CD14-positive monocyte (primary cell): ENCODE measurements at regions of chr11 and their contacts with region 1.

Region 1: GRCh38 chr11:64916775-64917662 is at the start of gene ATG2A:
- DNase-seq: peak; percentile 99 to 100 (median 99)
- H3K4me3 ChIP-seq: peak within 1 kb of the TSS; percentile 76 to 94 (median 84)
- H3K4me3 Mint-ChIP-seq: peak within 1 kb of the TSS; percentile 97 to 99
- H3K27ac ChIP-seq: peak within 1 kb of the TSS; percentile 69 to 84
- H3K27ac Mint-ChIP-seq: peak within 1 kb of the TSS; percentile 90 to 99 (median 97)
- H3K4me1 ChIP-seq: peaks cover 24 to 26% of the 10 kb centered on the region in 2 donors
- H3K4me1 Mint-ChIP-seq: peaks cover 27% of the 10 kb centered on the region
- H3K27me3 ChIP-seq: no peaks in the 10 kb centered on the region
- H3K27me3 Mint-ChIP-seq: peaks cover 0 to 2% (median 0%) of the 10 kb centered on the region in 3 donors
- CTCF ChIP-seq: no peak
- polyA plus RNA-seq, gene ATG2A: 2.6 to 24.9 (median 4.0) TPM

Region 2: DNA sequence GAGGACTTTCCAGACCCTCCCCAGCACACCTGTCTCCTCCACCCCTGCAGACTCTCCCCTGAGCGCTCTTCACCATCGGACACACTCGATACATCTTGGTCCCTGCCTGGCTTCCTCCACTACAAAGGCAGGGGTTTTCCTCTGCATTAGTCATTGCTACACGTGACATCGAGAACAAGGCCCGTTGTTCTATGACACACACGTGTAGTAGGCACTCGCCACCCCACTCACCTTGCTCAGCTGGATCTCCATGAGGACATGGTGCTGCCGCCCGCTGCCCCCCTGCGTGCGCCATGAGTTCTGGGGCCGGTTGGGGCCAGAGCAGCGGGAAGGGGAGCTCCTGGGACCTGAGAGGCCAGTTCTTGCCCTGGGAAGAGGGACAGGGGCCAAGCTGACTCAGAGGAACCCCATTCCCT is 16.7 kb before region 1 on chr11:
- intact Hi-C with region 1: no loop called
- DNase-seq: peak in 1 of 3 donors; percentile 61
- H3K4me3 ChIP-seq: no peak overlapping the region
- H3K4me3 Mint-ChIP-seq: no peak overlapping the region
- H3K27ac ChIP-seq: no peak overlapping the region
- H3K27ac Mint-ChIP-seq: peak overlapping the region in 3 of 7 donors; percentile 3 to 67 (median 5)
- H3K4me1 ChIP-seq: no peaks in the 10 kb centered on the region
- H3K4me1 Mint-ChIP-seq: no peaks in the 10 kb centered on the region
- H3K27me3 ChIP-seq: no peaks in the 10 kb centered on the region
- H3K27me3 Mint-ChIP-seq: no peaks in the 10 kb centered on the region
- CTCF ChIP-seq: no peak

Region 3: GRCh38 chr11:65027213-65028067 is 110.4 kb after region 1 on chr11 and contains the start of gene SNX15:
- intact Hi-C with region 1: loop called (anchors 5 kb)
- DNase-seq: peak; percentile 87 to 93 (median 88)
- H3K4me3 ChIP-seq: peak within 1 kb of the TSS; percentile 45 to 78 (median 66)
- H3K4me3 Mint-ChIP-seq: peak within 1 kb of the TSS; percentile 78 to 83
- H3K27ac ChIP-seq: peak within 1 kb of the TSS; percentile 63 to 78
- H3K27ac Mint-ChIP-seq: peak within 1 kb of the TSS; percentile 71 to 95 (median 90)
- H3K4me1 ChIP-seq: peaks cover 14 to 20% of the 10 kb centered on the region in 2 donors
- H3K4me1 Mint-ChIP-seq: peaks cover 25% of the 10 kb centered on the region
- H3K27me3 ChIP-seq: no peaks in the 10 kb centered on the region
- H3K27me3 Mint-ChIP-seq: peaks cover 0 to 1% (median 0%) of the 10 kb centered on the region in 3 donors
- CTCF ChIP-seq: peak; percentile 90
- polyA plus RNA-seq, gene SNX15: 16.2 to 26.7 (median 17.8) TPM

Region 4: DNA sequence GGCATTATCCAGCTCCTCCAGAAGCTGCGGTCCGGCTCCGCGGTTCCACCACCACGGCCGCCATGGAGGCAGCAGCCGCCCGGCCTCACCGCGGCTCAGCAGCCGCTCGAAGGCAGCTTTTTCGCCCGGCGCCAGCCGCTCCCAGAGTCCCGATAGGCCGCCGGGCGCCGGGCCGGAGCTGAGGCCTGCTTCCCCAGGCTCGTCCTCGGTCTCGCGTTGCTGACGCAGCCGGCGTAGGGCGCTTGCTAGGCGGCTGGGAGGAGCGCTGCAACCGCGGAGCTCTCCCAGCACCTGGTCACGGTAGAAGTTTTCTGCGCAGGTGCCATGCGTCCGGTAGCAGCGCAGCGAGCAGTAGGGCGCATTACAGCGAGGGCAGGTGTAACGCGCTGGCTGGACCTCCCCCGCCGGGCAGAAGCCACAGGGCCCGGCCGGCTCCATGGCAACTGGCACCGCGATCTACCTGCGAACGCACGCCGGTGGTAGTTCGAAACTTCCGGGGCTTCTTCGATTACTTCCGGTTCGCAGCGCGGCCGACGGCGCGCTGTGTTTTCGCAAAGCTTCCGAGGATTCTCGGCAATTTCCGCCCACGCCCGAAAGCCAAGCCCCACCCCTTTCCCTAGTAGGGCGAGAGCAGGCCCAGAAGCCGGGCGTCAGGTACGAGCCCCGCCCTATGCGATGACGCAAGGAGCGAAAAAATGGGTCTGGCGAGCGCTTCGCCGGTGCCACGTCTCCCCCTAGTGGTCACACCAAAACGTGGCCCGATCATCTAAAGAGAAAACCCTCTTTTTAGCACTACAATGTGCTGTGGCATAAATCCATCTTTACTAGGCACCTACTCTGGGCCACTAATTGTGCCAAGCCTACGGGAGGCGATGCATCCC is 200.4 kb after region 1 on chr11 and contains the start of gene ZNHIT2:
- intact Hi-C with region 1: loop called in 1 of 2 experiments (anchors 5 kb)
- DNase-seq: peak; percentile 99
- H3K4me3 ChIP-seq: peak within 1 kb of the TSS; percentile 60 to 93 (median 91)
- H3K4me3 Mint-ChIP-seq: peak within 1 kb of the TSS; percentile 82 to 90
- H3K27ac ChIP-seq: peak within 1 kb of the TSS; percentile 67 to 85
- H3K27ac Mint-ChIP-seq: peak within 1 kb of the TSS; percentile 79 to 90 (median 88)
- H3K4me1 ChIP-seq: peaks cover 30 to 48% of the 10 kb centered on the region in 2 donors
- H3K4me1 Mint-ChIP-seq: peaks cover 39% of the 10 kb centered on the region
- H3K27me3 ChIP-seq: peaks cover 0 to 15% of the 10 kb centered on the region in 2 donors
- H3K27me3 Mint-ChIP-seq: peaks cover 13 to 17% (median 13%) of the 10 kb centered on the region in 3 donors
- CTCF ChIP-seq: peak; percentile 94
- polyA plus RNA-seq, gene ZNHIT2: 2.1 to 9.4 (median 5.8) TPM